K562 (cell line): ENCODE measurements at regions of chr7 and their contacts with region 1.

Region 1: GRCh38 chr7:33050535-33051318 is 11.8 kb downstream of the NT5C3A start:
- DNase-seq: peak in 2 of 4 experiments; percentile 28 to 57
- ATAC-seq: peak; percentile 71
- H3K4me3 ChIP-seq: no peak overlapping the region
- H3K27ac ChIP-seq: 0 out of 3 replicates have a peak overlapping the region, but pooled peaks have one; percentile 11
- H3K4me1 ChIP-seq: peaks cover 3 to 14% of the 10 kb centered on the region in 2 experiments; a peak in 4 of 5 replicates
- H3K27me3 ChIP-seq: no peaks in the 10 kb centered on the region
- CTCF ChIP-seq: peak; percentile 44 to 74 (median 47); a peak in 4 of 6 replicates
- EP300 ChIP-seq: no peak
- POLR2A ChIP-seq: no peak
- RAD21 ChIP-seq: peak; percentile 65 to 81; a peak in 3 of 4 replicates

Region 2: DNA sequence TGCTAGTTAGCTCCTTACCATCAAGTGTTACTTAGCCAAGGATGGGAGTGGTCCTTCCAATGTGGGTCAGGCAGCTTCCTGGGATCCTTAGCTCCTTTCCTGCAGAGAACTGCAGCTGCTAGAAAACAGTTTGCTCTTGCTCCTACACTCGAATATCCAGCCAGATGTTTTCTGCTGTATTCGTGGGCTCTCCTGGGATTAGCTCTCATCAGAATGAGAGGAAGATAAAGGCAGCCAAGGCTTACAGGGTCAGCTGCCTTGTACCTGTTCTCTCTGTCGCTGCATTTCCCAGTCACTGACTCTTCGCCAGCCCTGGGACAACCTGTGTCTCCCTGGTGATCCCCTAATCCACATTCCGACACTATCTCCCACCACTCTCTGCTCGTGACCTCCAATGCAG is 1739.2 kb before region 1 on chr7:
- CTCF ChIA-PET with region 1: no interaction called
- POLR2A ChIA-PET with region 1: no interaction called
- in situ Hi-C with region 1: no loop called
- intact Hi-C with region 1: no loop called
- DNase-seq: no peak
- ATAC-seq: no peak
- H3K4me3 ChIP-seq: no peak overlapping the region
- H3K27ac ChIP-seq: no peak overlapping the region
- H3K4me1 ChIP-seq: no peaks in the 10 kb centered on the region
- H3K27me3 ChIP-seq: peaks cover 0 to 7% of the 10 kb centered on the region in 2 experiments; a peak in 1 of 5 replicates
- CTCF ChIP-seq: no peak
- EP300 ChIP-seq: no peak
- POLR2A ChIP-seq: no peak
- RAD21 ChIP-seq: no peak

Region 3: DNA sequence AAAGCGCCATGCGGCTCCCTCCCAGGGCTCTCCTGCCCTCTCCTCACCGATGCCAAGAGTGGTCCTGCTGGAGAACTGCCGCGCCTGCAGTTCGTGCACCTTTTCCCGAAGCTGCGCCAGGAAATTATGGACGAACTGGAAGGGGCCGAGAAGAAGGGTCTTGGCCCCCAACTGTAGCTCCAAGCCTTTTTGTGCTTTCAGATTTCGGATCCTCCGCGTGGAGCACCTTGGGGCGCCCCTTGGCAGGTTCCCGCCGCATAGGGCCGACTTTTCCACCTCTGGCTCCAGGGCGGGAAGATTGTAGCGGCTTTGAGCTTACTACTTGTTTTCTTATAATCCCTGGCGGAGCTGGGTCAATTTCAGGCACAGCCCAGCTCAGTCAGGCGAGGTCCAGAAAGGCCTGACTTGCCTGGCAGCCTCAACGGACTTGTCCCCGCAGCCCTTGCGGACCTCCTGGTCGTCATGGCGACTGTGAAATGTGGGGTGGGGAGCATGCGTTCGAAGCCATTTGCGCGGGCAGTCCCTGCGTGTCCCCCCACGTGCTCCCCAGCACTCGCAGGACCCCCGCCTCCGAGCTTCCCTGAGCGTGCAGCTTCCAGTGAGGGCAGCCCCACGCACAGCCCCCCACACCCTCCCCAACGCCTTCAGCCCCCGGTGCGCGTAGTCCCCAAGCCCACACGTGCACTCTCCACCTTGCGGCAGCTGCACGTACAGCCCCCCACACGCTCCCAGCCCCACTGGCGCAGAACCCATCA is 289.1 kb before region 1 on chr7:
- CTCF ChIA-PET with region 1: no interaction called
- POLR2A ChIA-PET with region 1: no interaction called
- in situ Hi-C with region 1: no loop called
- intact Hi-C with region 1: loop called (anchors 10 kb)
- DNase-seq: no peak
- ATAC-seq: no peak
- H3K4me3 ChIP-seq: no peak overlapping the region
- H3K27ac ChIP-seq: no peak overlapping the region
- H3K4me1 ChIP-seq: peaks cover 0 to 3% of the 10 kb centered on the region in 2 experiments; a peak in 3 of 5 replicates
- H3K27me3 ChIP-seq: no peaks in the 10 kb centered on the region
- CTCF ChIP-seq: no peak
- EP300 ChIP-seq: no peak
- POLR2A ChIP-seq: no peak
- RAD21 ChIP-seq: no peak

Region 4: DNA sequence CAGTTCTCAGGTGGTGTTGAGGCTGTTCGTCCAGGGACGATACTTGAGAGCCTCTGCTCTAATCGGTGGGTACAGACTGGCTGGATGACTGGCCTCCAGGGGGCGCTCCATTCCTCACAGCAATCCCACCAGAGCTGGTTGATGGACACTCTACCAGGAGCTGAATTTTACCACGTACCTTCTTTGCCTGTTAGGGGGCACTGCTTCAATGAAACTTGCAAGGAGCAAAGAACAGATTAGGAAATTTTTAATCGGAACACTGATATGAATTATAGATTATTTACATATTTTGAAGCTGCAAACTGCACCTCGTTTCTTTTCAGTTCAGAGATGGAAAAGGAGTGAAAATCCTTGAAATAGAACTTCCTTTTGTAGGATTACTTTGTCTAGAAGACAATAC is 204.0 kb before region 1 on chr7:
- CTCF ChIA-PET with region 1: no interaction called
- POLR2A ChIA-PET with region 1: no interaction called
- in situ Hi-C with region 1: no loop called
- intact Hi-C with region 1: loop called (anchors 2 kb)
- DNase-seq: peak; percentile 66 to 90 (median 70)
- ATAC-seq: peak; percentile 100
- H3K4me3 ChIP-seq: no peak overlapping the region
- H3K27ac ChIP-seq: no peak overlapping the region
- H3K4me1 ChIP-seq: no peaks in the 10 kb centered on the region; a peak in 2 of 5 replicates
- H3K27me3 ChIP-seq: no peaks in the 10 kb centered on the region
- CTCF ChIP-seq: peak; percentile 88 to 96 (median 94)
- EP300 ChIP-seq: peak; percentile 34; the same call in 1 of the 2 replicates
- POLR2A ChIP-seq: no peak
- RAD21 ChIP-seq: peak; percentile 74 to 85

Region 5: GRCh38 chr7:32881074-32882017 is 169.4 kb before region 1 on chr7:
- CTCF ChIA-PET with region 1: no interaction called
- POLR2A ChIA-PET with region 1: no interaction called
- in situ Hi-C with region 1: no loop called
- intact Hi-C with region 1: no loop called
- DNase-seq: no peak
- ATAC-seq: peak; percentile 1; the same call in 2 of the 3 replicates
- H3K4me3 ChIP-seq: no peak overlapping the region
- H3K27ac ChIP-seq: no peak overlapping the region
- H3K4me1 ChIP-seq: peaks cover 20 to 41% of the 10 kb centered on the region in 2 experiments
- H3K27me3 ChIP-seq: no peaks in the 10 kb centered on the region
- CTCF ChIP-seq: no peak
- EP300 ChIP-seq: no peak
- POLR2A ChIP-seq: no peak
- RAD21 ChIP-seq: no peak; a peak in 1 of 4 replicates

Region 6: GRCh38 chr7:33062782-33063443 is 12.2 kb after region 1 on chr7:
- CTCF ChIA-PET with region 1: no interaction called
- POLR2A ChIA-PET with region 1: interaction called, 33 read pairs
- in situ Hi-C with region 1: no loop called
- intact Hi-C with region 1: no loop called
- DNase-seq: peak; percentile 95 to 97 (median 96)
- ATAC-seq: peak; percentile 96
- H3K4me3 ChIP-seq: peak overlapping the region; percentile 90
- H3K27ac ChIP-seq: peak overlapping the region; percentile 94
- H3K4me1 ChIP-seq: peaks cover 7 to 20% of the 10 kb centered on the region in 2 experiments; a peak in 3 of 5 replicates
- H3K27me3 ChIP-seq: no peaks in the 10 kb centered on the region
- CTCF ChIP-seq: no peak
- EP300 ChIP-seq: no peak
- POLR2A ChIP-seq: peak; percentile 82
- RAD21 ChIP-seq: no peak

Region 7: DNA sequence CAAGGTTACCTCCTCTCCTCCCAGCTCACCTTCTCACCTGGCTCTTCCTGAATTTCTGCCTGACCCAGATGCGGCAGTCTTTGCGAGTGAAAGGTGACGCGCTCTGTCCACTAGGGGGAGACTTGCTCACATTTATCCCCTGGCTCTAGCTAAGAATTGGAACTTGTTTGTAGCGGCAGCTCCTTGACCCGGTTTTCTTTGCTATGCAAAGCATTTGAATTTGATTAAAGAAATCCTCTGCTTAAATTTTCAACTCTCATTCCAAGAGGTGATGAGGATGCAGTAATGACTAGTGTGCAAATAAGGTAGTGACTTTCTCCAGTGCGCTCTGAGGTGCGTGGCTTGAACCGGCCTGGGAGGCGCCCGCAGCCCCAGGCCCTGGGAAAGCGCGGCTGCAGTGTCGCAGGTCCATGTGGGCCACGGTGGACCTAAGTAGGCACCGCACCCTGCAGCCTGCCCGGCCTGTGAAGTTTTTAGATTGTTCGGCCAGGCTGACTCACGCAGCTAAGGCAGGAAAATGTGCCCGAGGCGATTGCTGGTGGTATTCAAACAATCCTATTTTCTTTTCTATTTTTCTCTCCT is 1270.4 kb after region 1 on chr7:
- CTCF ChIA-PET with region 1: no interaction called
- POLR2A ChIA-PET with region 1: no interaction called
- in situ Hi-C with region 1: no loop called
- intact Hi-C with region 1: no loop called
- DNase-seq: peak; percentile 57 to 60 (median 59)
- ATAC-seq: peak; percentile 90
- H3K4me3 ChIP-seq: no peak overlapping the region
- H3K27ac ChIP-seq: no peak overlapping the region
- H3K4me1 ChIP-seq: no peaks in the 10 kb centered on the region
- H3K27me3 ChIP-seq: no peaks in the 10 kb centered on the region
- CTCF ChIP-seq: peak; percentile 59 to 77 (median 60)
- EP300 ChIP-seq: no peak
- POLR2A ChIP-seq: no peak
- RAD21 ChIP-seq: peak; percentile 15 to 53; a peak in 3 of 4 replicates